Psoas muscle (tissue), 8 donors: ENCODE measurements at regions of chr6 and their contacts with region 1.

Region 1: DNA sequence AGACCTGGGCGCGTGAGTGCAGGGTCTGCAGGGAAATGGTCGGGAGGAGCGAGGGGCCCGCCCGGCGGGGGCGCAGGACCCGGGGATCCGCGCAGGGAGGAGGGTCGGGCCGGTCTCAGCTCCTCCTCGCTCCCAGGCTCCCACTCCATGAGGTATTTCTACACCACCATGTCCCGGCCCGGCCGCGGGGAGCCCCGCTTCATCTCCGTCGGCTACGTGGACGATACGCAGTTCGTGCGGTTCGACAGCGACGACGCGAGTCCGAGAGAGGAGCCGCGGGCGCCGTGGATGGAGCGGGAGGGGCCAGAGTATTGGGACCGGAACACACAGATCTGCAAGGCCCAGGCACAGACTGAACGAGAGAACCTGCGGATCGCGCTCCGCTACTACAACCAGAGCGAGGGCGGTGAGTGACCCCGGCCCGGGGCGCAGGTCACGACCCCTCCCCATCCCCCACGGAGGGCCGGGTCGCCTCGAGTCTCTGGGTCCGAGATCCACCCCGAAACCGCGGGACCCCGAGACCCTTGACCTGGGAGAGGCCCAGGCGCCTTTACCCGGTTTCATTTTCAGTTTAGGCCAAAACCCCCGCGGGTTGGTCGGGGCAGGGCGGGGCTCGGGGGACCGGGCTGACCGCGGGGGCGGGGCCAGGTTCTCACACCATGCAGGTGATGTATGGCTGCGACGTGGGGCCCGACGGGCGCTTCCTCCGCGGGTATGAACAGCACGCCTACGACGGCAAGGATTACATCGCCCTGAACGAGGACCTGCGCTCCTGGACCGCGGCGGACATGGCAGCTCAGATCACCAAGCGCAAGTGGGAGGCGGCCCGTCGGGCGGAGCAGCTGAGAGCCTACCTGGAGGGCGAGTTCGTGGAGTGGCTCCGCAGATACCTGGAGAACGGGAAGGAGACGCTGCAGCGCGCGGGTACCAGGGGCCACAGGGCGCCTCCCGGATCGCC is 54.2 kb upstream of the HLA-A start:
- DNase-seq: peak; percentile 79 to 80
- ATAC-seq: peak; percentile 74 to 92 (median 79)
- H3K4me3 ChIP-seq: peak overlapping the region; percentile 74
- H3K27ac ChIP-seq: peak overlapping the region; percentile 71
- H3K4me1 ChIP-seq: no peaks in the 10 kb centered on the region
- H3K27me3 ChIP-seq: no peaks in the 10 kb centered on the region
- CTCF ChIP-seq: no peak

Region 2: GRCh38 chr6:29649701-29650673 is 238.1 kb before region 1 on chr6:
- intact Hi-C with region 1: no loop called
- DNase-seq: peak; percentile 96 to 98
- ATAC-seq: peak; percentile 98 to 99 (median 99)
- H3K4me3 ChIP-seq: peak overlapping the region; percentile 81
- H3K27ac ChIP-seq: peak overlapping the region; percentile 94
- H3K4me1 ChIP-seq: peaks cover 3% of the 10 kb centered on the region
- H3K27me3 ChIP-seq: no peaks in the 10 kb centered on the region
- CTCF ChIP-seq: peak; percentile 93

Region 3: GRCh38 chr6:29763491-29764289 is 124.4 kb before region 1 on chr6:
- intact Hi-C with region 1: no loop called
- DNase-seq: no peak
- ATAC-seq: peak in 2 of 4 donors; percentile 24 to 36
- H3K4me3 ChIP-seq: no peak overlapping the region
- H3K27ac ChIP-seq: no peak overlapping the region
- H3K4me1 ChIP-seq: peaks cover 5% of the 10 kb centered on the region
- H3K27me3 ChIP-seq: no peaks in the 10 kb centered on the region
- CTCF ChIP-seq: no peak

Region 4: DNA sequence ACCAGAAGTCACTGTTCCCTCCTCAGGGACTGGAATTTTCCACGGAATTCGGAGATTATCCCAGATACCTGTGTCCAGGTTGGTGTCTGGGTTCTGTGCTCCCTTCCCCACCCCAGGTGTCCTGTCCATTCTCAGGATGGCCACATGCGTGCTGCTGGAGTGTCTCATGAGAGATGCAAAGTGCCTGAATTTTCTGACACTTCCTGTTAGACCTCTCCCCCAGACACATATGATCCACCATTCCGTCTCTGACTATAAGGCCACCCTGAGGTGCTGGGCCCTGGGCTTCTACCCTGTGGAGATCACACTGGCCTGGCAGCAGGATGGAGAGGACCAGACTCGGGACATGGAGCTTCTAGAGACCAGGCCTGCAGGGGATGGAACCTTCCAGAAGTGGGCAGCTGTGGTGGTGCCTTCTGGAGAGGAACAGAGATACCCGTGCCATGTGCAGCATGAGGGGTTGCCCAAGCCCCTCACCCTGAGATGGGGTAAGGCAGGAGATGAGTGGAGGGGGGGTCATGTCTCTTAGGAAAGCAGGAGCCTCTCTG is 39.8 kb after region 1 on chr6:
- intact Hi-C with region 1: no loop called
- DNase-seq: no peak
- ATAC-seq: no peak
- H3K4me3 ChIP-seq: no peak overlapping the region
- H3K27ac ChIP-seq: no peak overlapping the region
- H3K4me1 ChIP-seq: no peaks in the 10 kb centered on the region
- H3K27me3 ChIP-seq: no peaks in the 10 kb centered on the region
- CTCF ChIP-seq: no peak

Region 5: DNA sequence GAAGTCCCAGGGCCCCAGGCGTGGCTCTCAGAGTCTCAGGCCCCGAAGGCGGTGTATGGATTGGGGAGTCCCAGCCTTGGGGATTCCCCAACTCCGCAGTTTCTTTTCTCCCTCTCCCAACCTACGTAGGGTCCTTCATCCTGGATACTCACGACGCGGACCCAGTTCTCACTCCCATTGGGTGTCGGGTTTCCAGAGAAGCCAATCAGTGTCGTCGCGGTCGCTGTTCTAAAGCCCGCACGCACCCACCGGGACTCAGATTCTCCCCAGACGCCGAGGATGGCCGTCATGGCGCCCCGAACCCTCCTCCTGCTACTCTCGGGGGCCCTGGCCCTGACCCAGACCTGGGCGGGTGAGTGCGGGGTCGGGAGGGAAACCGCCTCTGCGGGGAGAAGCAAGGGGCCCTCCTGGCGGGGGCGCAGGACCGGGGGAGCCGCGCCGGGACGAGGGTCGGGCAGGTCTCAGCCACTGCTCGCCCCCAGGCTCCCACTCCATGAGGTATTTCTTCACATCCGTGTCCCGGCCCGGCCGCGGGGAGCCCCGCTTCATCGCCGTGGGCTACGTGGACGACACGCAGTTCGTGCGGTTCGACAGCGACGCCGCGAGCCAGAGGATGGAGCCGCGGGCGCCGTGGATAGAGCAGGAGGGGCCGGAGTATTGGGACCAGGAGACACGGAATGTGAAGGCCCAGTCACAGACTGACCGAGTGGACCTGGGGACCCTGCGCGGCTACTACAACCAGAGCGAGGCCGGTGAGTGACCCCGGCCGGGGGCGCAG is 54.4 kb after region 1 on chr6 and contains the start of gene HLA-A:
- intact Hi-C with region 1: loop called in 1 of 2 experiments (anchors 1 kb)
- DNase-seq: peak; percentile 91 to 92
- ATAC-seq: peak; percentile 97 to 99 (median 98)
- H3K4me3 ChIP-seq: peak within 1 kb of the TSS; percentile 62
- H3K27ac ChIP-seq: peak within 1 kb of the TSS; percentile 80
- H3K4me1 ChIP-seq: no peaks in the 10 kb centered on the region
- H3K27me3 ChIP-seq: no peaks in the 10 kb centered on the region
- CTCF ChIP-seq: no peak
- total RNA-seq, gene HLA-A: 86.6 to 204 (median 182) TPM

Region 6: GRCh38 chr6:31143148-31143547 is 1255.0 kb after region 1 on chr6:
- intact Hi-C with region 1: no loop called
- DNase-seq: peak; percentile 57 to 87
- ATAC-seq: peak in 3 of 4 donors; percentile 66 to 76 (median 68)
- H3K4me3 ChIP-seq: no peak overlapping the region
- H3K27ac ChIP-seq: no peak overlapping the region
- H3K4me1 ChIP-seq: no peaks in the 10 kb centered on the region
- H3K27me3 ChIP-seq: no peaks in the 10 kb centered on the region
- CTCF ChIP-seq: no peak